Activated CD8-positive, alpha-beta T cell treated with anti-CD3 and anti-CD28 coated beads, Interleukin-2, amount 10 ng/mL, durations not matched to agents 7 days and 5 days (primary cell): ENCODE measurements at regions of chr11 and their contacts with region 1.

Region 1: GRCh38 chr11:18768472-18768901 is 23.1 kb downstream of the PTPN5 start:
- DNase-seq: no peak
- ATAC-seq: peak; percentile 32
- H3K4me3 Mint-ChIP-seq: no peak overlapping the region
- H3K27ac Mint-ChIP-seq: no peak overlapping the region
- H3K4me1 Mint-ChIP-seq: peaks cover 29% of the 10 kb centered on the region
- H3K27me3 Mint-ChIP-seq: peaks cover 18% of the 10 kb centered on the region

Region 2: GRCh38 chr11:18794956-18795355 is 26.5 kb after region 1 on chr11:
- CTCF ChIA-PET with region 1: interaction called, 10 read pairs
- POLR2A ChIA-PET with region 1: no interaction called
- DNase-seq: no peak
- ATAC-seq: no peak
- H3K4me3 Mint-ChIP-seq: no peak overlapping the region
- H3K27ac Mint-ChIP-seq: no peak overlapping the region
- H3K4me1 Mint-ChIP-seq: no peaks in the 10 kb centered on the region
- H3K27me3 Mint-ChIP-seq: peaks cover 52% of the 10 kb centered on the region

Region 3: GRCh38 chr11:18844753-18845367 is 76.4 kb after region 1 on chr11:
- CTCF ChIA-PET with region 1: no interaction called
- POLR2A ChIA-PET with region 1: no interaction called
- DNase-seq: no peak
- ATAC-seq: peak; percentile 55
- H3K4me3 Mint-ChIP-seq: no peak overlapping the region
- H3K27ac Mint-ChIP-seq: no peak overlapping the region
- H3K4me1 Mint-ChIP-seq: no peaks in the 10 kb centered on the region
- H3K27me3 Mint-ChIP-seq: peaks cover 24% of the 10 kb centered on the region